Motor neuron (in vitro differentiated cells): ENCODE measurements at regions of chr20 and their contacts with region 1.

Region 1: GRCh38 chr20:45771182-45771759 is 20.4 kb downstream of the WFDC3 start:
- ATAC-seq: peak; percentile 55 to 79 (median 70)
- H3K4me3 ChIP-seq: no peak overlapping the region
- H3K27ac ChIP-seq: no peak overlapping the region
- H3K4me1 ChIP-seq: peaks cover 3 to 7% of the 10 kb centered on the region in 2 donors

Region 2: GRCh38 chr20:45311589-45312211 is 459.6 kb before region 1 on chr20:
- in situ Hi-C with region 1: loop called in 2 of 9 experiments (anchors 25 kb)
- ATAC-seq: peak; percentile 43 to 93 (median 74)
- H3K4me3 ChIP-seq: no peak overlapping the region
- H3K27ac ChIP-seq: no peak overlapping the region
- H3K4me1 ChIP-seq: no peaks in the 10 kb centered on the region

Region 3: DNA sequence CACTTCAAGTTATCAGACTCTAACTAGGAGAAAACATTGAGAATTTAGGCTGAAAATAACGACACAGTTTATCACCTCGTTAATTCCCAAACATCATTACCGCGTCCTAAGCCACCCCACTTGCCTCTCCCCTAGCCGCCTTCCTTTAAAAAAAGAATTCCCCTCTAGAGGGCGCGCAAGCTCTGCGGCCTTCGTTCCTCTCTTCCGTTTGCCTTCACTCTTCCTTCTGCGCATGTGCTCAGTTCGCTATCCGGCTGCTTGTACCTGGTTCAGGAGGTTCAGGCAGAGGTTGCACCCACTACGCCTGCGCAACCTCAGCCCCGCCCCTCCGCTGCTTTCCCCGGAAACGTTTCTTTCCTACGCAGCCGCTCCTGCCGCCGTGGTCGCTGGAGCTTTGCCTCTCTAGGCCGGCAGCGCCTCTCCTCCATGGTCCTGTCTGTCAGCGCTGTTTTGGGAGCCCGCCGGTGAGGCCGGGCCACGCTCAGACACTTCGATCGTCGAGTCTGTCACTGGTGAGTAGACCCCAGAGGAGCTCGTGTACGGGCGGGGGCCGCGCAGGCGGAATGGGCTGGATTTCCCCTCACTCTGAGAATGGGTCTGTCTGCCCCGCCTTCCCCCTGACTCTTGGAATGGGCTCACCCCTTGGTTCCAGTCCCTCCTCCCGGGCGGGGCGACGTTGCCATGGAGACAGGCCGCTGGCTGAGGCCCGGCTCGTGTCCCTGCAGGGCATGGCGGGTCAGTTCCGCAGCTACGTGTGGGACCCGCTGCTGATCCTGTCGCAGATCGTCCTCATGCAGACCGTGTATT is 408.3 kb before region 1 on chr20 and contains the start of gene SYS1:
- in situ Hi-C with region 1: loop called in 1 of 9 experiments (anchors 25 kb)
- ATAC-seq: peak; percentile 87 to 92 (median 92)
- H3K4me3 ChIP-seq: peak within 1 kb of the TSS; percentile 75 to 96 (median 80)
- H3K27ac ChIP-seq: peak within 1 kb of the TSS; percentile 98 to 99
- H3K4me1 ChIP-seq: peaks cover 3 to 5% of the 10 kb centered on the region in 2 donors
- total RNA-seq, gene SYS1: 17.3 to 49.8 (median 21.9) TPM

Region 4: DNA sequence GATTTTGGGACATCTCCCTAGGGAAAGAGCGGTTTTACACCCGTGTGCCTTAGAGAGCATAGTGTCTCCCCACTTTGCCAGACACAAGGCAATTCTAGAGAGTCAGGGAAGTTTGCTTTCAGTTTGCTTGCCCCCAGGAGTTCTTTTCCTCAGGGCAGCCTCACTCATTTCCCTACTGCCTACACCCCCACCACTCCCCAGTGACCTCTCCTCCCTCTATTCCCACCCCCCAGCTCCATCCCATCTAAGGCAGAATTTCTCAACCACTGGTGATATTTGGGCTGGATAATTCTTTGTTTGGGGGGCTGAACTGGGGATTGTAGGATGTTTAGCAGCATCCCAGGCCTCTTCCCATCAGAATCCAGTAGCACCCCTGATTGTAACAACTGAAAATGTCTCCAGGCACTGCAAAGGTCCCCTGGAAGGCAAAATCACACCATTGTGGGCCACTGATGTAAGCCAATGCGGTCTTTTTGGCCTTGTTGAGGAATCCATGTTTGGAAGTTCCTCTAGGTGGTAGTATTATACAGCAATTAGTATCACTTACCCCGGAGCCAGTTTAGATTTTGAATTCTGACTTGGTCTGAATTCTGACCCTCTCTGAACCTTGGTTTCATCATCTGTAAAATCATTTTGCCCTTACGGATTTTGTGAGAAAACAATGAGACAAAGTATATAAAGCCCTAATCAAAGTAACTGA is 225.4 kb before region 1 on chr20:
- in situ Hi-C with region 1: loop called in 4 of 9 experiments (anchors 10 to 25 kb)
- ATAC-seq: peak in 5 of 8 experiments; percentile 46 to 96 (median 78)
- H3K4me3 ChIP-seq: no peak overlapping the region
- H3K27ac ChIP-seq: no peak overlapping the region
- H3K4me1 ChIP-seq: no peaks in the 10 kb centered on the region

Region 5: DNA sequence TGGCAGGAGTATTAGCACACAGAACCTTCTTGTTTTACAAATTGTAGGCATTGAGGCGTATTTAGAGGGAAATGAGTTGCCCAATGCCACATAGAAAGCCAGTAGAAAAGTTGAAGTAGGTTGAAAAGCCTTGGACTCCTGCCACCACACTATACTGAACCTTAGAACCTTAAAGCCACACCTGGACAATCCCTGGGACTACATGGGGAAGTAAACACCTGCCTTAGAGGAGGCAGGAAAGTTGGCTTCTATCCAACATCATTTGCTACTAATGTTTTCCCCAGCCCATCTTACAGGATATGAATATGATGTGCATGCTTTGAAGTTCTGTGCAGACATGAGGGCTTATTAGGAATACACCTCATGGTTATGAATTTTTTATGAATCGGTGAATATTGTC is 218.8 kb before region 1 on chr20:
- in situ Hi-C with region 1: loop called in 4 of 9 experiments (anchors 10 to 25 kb)
- ATAC-seq: no peak
- H3K4me3 ChIP-seq: no peak overlapping the region
- H3K27ac ChIP-seq: no peak overlapping the region
- H3K4me1 ChIP-seq: no peaks in the 10 kb centered on the region